Calu3 (cell line): ENCODE measurements at regions of chr1 and their contacts with region 1.

Region 1: DNA sequence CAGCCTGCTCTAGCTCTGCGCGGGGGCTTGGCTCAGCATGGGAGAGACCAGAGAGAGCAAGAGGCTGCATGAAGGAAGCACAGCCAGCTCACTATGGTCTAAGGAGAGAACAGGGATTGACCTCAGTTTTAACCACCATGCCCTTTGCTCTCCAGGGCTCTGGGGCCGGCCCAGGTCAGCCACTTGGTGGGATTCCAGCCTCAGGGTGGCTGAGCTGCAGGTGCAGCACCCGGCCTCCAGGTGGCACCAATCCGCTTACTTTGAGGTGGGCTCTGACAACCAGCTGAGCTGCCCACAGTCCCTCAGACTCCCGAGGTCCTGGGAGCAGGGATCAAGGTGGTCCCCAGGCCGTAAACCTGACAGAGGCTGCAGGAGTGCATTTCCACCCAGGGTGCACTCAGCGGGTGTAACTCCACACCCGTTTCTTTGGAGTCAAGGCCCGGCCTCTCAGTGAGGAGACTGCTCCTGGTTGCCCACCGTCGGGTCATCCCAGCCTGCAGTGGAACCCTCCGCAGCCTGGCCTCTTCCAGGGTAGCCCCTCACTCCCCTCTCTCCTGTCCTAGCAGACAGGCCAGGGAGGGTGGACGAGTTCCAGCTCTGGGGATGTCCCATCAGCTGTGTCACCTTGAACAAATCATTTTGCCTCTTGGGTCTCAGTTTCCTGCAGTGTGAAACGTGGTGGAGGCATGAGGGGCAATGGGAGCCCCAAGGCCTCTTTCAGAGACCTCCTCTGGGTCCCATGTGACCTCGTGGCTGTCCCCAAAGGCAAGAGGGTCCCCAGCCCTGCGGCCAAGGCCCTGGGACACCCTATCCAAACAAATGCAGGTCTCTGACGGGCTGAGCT is 607 bp upstream of the LGR6 start:
- DNase-seq: peak; percentile 81
- H3K4me3 Mint-ChIP-seq: no peak overlapping the region
- H3K27ac Mint-ChIP-seq: no peak overlapping the region
- H3K4me1 Mint-ChIP-seq: peaks cover 4% of the 10 kb centered on the region
- H3K27me3 Mint-ChIP-seq: peaks cover 77% of the 10 kb centered on the region
- CTCF ChIP-seq: peak; percentile 94

Region 2: GRCh38 chr1:202074985-202075750 is 117.8 kb before region 1 on chr1:
- CTCF ChIA-PET with region 1: no interaction called
- intact Hi-C with region 1: no loop called
- DNase-seq: no peak
- H3K4me3 Mint-ChIP-seq: no peak overlapping the region
- H3K27ac Mint-ChIP-seq: no peak overlapping the region
- H3K4me1 Mint-ChIP-seq: peaks cover 40% of the 10 kb centered on the region
- H3K27me3 Mint-ChIP-seq: no peaks in the 10 kb centered on the region
- CTCF ChIP-seq: no peak

Region 3: DNA sequence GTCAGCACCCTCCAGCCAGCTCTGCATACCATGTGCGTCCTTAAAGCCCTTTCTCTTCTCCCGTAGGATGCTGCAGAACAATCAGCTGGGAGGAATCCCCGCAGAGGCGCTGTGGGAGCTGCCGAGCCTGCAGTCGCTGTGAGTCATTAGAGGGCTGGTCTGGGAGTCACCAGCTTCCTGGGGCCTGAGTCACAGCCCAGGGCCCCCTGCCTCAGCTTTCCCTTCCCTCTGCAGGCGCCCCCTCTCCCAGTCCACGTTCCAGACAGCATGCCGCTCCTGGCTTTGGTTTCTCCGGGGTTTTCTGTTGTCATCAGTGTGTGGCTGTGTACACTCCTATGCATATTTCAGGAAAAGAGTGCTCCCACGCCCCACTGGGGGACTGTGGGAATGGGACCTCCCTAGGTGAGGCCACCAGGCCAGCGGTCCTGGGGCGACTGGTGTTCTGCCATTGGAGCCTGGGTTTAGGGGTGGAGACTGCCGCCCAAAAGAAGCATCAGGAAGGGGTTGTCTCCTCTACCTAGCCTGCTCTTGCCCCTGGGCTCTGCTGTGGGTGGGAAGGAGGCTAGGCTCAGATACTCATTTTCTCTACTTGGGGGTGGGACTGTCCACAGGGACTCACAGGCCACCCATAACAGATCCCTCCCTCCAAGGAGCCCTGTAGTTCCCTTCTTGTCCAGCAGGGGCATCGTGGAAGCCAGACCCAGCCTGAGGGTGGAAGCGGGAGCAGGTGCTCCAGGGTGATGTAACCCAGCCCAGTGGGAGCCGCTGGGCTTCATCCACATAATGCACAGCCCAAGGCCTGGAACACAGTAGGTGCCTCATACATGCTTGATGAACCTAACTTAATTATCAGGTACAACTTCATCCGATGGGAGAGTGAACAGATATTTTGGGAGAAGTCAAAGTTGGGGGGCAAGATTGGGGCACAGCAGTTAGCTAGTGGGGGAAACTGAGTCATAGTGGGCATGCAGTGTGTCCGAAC is 43.2 kb after region 1 on chr1:
- CTCF ChIA-PET with region 1: interaction called, 13 read pairs
- intact Hi-C with region 1: no loop called
- DNase-seq: peak; percentile 95
- H3K4me3 Mint-ChIP-seq: peak overlapping the region; percentile 40
- H3K27ac Mint-ChIP-seq: peak overlapping the region; percentile 34
- H3K4me1 Mint-ChIP-seq: peaks cover 27% of the 10 kb centered on the region
- H3K27me3 Mint-ChIP-seq: peaks cover 27% of the 10 kb centered on the region
- CTCF ChIP-seq: peak; percentile 96

Region 4: GRCh38 chr1:202315576-202316168 is 122.7 kb after region 1 on chr1:
- CTCF ChIA-PET with region 1: interaction called, 26 read pairs
- intact Hi-C with region 1: loop called (anchors 1 kb)
- DNase-seq: peak; percentile 88
- H3K4me3 Mint-ChIP-seq: no peak overlapping the region
- H3K27ac Mint-ChIP-seq: no peak overlapping the region
- H3K4me1 Mint-ChIP-seq: no peaks in the 10 kb centered on the region
- H3K27me3 Mint-ChIP-seq: peaks cover 50% of the 10 kb centered on the region
- CTCF ChIP-seq: peak; percentile 88

Region 5: GRCh38 chr1:202365092-202365815 is 172.3 kb after region 1 on chr1:
- CTCF ChIA-PET with region 1: no interaction called
- intact Hi-C with region 1: no loop called
- DNase-seq: no peak
- H3K4me3 Mint-ChIP-seq: no peak overlapping the region
- H3K27ac Mint-ChIP-seq: no peak overlapping the region
- H3K4me1 Mint-ChIP-seq: no peaks in the 10 kb centered on the region
- H3K27me3 Mint-ChIP-seq: no peaks in the 10 kb centered on the region
- CTCF ChIP-seq: no peak

Region 6: GRCh38 chr1:202405928-202406327 is 212.9 kb after region 1 on chr1:
- CTCF ChIA-PET with region 1: no interaction called
- intact Hi-C with region 1: no loop called
- DNase-seq: no peak
- H3K4me3 Mint-ChIP-seq: no peak overlapping the region
- H3K27ac Mint-ChIP-seq: no peak overlapping the region
- H3K4me1 Mint-ChIP-seq: peaks cover 12% of the 10 kb centered on the region
- H3K27me3 Mint-ChIP-seq: no peaks in the 10 kb centered on the region
- CTCF ChIP-seq: no peak